ENCODE measurements at regions of chr6 and their contacts with region 1.

Region 1: DNA sequence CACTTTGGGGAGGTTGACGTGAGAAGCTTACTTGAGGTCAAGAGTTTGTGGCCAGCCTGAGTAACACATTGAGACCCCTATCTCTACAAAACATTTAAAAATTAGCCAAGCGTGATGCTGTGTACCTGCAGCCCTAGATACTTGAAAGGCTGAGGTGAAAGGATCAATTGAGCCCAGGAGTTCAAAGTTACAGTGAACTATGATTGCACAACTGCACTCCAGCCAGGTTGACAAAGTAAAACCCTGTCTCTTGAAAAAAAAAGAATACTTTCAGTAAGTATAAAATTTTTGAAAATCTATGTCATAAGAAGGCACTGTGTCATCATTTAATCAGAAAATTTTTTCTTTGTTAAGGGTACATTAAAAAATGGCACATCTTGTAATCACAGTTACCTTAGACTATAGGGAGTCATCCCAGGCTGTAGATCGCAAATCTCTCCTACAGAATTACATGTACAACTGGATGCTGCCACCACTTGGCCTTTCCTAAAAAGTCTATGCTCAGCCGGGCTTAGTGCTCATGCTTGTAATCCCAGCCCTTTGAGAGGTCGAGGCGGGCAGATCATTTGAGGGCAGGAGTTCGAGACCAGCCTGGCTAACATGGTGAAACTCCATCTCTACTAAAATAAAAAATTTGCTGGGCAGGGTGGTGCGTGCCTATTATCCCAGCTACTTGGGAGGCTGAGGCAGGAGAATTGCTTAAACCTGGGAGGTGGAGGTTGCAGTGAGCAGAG is 17.0 kb upstream of the MRS2 start:
- DNase-seq: no peak
- H3K4me3 ChIP-seq: no peak overlapping the region
- H3K27ac ChIP-seq: peak overlapping the region; percentile 41
- H3K4me1 ChIP-seq: peaks cover 34% of the 10 kb centered on the region
- H3K27me3 ChIP-seq: no peaks in the 10 kb centered on the region
- CTCF ChIP-seq: no peak

Region 2: GRCh38 chr6:24064082-24064481 is 321.6 kb before region 1 on chr6:
- CTCF ChIA-PET with region 1: no interaction called
- POLR2A ChIA-PET with region 1: interaction called, 27 read pairs
- intact Hi-C with region 1: loop called (anchors 5 kb)
- DNase-seq: peak; percentile 70
- H3K4me3 ChIP-seq: no peak overlapping the region
- H3K27ac ChIP-seq: no peak overlapping the region
- H3K4me1 ChIP-seq: peaks cover 9% of the 10 kb centered on the region
- H3K27me3 ChIP-seq: no peaks in the 10 kb centered on the region
- CTCF ChIP-seq: peak; percentile 73

Region 3: DNA sequence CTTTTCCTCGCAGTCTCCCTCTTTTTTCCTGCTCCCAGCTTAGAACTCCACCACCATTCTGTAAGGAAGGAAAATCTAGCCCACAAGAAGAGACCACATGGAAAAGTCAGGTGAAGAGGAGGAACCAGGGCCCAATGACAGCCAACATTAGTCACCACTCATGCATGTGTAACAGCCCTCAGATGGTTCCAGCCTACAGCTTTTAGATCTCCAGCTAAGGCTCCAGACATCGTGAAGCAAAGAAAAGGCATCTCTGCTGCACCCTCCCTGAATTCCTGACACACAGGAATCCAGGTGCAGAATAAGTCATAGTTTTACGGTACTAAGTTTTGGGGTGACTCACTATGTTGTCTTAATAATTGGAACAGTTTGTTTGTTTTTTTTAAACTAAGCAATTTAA is 53.4 kb before region 1 on chr6:
- CTCF ChIA-PET with region 1: no interaction called
- POLR2A ChIA-PET with region 1: no interaction called
- intact Hi-C with region 1: no loop called
- DNase-seq: no peak
- H3K4me3 ChIP-seq: no peak overlapping the region
- H3K27ac ChIP-seq: no peak overlapping the region
- H3K4me1 ChIP-seq: peaks cover 44% of the 10 kb centered on the region
- H3K27me3 ChIP-seq: no peaks in the 10 kb centered on the region
- CTCF ChIP-seq: no peak

Region 4: GRCh38 chr6:24359640-24360454 is 25.9 kb before region 1 on chr6:
- CTCF ChIA-PET with region 1: interaction called, 8 read pairs
- POLR2A ChIA-PET with region 1: no interaction called
- intact Hi-C with region 1: loop called (anchors 1 kb)
- DNase-seq: peak; percentile 98
- H3K4me3 ChIP-seq: peak overlapping the region; percentile 41
- H3K27ac ChIP-seq: peak overlapping the region; percentile 81
- H3K4me1 ChIP-seq: peaks cover 25% of the 10 kb centered on the region
- H3K27me3 ChIP-seq: no peaks in the 10 kb centered on the region
- CTCF ChIP-seq: peak; percentile 95

Region 5: GRCh38 chr6:24630856-24631505 is 245.3 kb after region 1 on chr6:
- CTCF ChIA-PET with region 1: no interaction called
- POLR2A ChIA-PET with region 1: interaction called, 12 read pairs
- intact Hi-C with region 1: no loop called
- DNase-seq: no peak
- H3K4me3 ChIP-seq: no peak overlapping the region
- H3K27ac ChIP-seq: no peak overlapping the region
- H3K4me1 ChIP-seq: no peaks in the 10 kb centered on the region
- H3K27me3 ChIP-seq: no peaks in the 10 kb centered on the region
- CTCF ChIP-seq: no peak

Region 6: DNA sequence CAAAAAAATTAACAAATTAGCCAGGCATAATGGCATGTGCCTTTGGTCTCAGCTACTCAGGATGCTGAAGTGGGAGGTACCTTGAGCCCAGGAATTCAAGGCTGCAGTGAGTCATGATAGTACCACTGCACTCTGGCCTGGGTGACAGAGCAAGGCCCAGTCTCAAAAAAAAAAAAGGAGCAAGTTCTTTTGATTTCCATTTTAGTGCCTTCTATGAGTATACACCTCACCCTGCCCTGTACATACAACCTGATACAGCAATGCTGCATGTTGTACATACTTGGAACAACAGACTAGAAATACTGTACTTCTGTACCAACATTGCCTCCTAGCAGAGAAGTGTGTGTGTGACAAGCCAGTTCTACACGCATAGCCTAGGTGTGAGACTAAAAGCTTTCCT is 796.2 kb after region 1 on chr6:
- CTCF ChIA-PET with region 1: no interaction called
- POLR2A ChIA-PET with region 1: no interaction called
- intact Hi-C with region 1: no loop called
- DNase-seq: no peak
- H3K4me3 ChIP-seq: no peak overlapping the region
- H3K27ac ChIP-seq: no peak overlapping the region
- H3K4me1 ChIP-seq: no peaks in the 10 kb centered on the region
- H3K27me3 ChIP-seq: no peaks in the 10 kb centered on the region
- CTCF ChIP-seq: no peak

Measured in A673 (cell line).